GM10248 (cell line): ENCODE measurements at regions of chr9 and their contacts with region 1.

Region 1: DNA sequence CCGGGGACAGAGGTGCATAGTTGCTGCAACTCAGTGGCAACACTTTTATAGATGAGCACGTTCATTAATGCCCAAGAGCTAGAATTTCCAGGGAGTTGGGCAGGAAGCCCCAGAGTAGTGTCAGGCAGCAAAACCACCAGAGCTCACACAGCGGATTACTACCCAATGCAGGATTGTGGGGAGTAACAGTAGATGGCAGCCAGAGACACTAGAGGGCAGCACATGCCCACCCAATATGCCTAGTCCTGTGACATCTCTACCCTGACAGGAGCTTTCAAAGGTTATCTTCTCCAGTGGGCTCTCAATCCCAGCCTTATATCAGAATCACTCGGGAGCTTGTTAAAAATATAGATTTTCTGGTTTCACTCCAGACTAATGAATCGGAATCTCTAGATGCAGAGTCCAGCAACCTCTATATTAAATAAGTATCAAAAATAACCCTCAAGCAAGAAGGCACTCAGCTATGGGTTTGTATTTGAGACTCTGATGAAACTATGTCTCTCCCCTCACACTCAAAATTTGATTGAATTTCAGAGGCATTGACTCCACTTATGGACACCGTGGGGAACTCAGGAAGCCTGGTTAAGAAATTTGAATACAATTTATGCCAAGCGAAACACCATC is 58.4 kb upstream of the PHF24 start:
- DNase-seq: peak; percentile 72
- CTCF ChIP-seq: peak; percentile 82

Region 2: DNA sequence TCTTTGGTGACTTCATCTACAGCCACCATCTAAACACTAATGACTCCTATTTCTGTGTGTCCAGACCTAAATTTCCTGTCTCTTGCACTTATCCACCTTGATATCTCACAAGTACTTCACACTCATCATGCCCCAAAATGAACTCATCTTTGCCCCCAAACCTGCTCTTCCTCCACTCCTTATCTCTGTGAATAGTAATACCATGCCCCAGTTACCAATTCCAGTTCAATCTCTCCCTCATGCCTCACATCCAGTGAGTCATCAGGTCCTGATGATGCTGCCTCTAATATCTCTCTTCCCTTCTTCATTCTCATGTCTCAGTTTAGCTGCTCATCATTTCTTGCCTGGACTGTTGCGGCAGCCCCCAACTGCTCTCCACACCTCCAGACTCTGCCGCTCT is 75.0 kb after region 1 on chr9:
- CTCF ChIA-PET with region 1: interaction called, 33 read pairs
- POLR2A ChIA-PET with region 1: no interaction called
- DNase-seq: no peak
- CTCF ChIP-seq: no peak

Region 3: GRCh38 chr9:34994260-34994899 is 94.7 kb after region 1 on chr9:
- CTCF ChIA-PET with region 1: interaction called, 19 read pairs
- POLR2A ChIA-PET with region 1: no interaction called
- DNase-seq: no peak
- CTCF ChIP-seq: peak; percentile 38

Region 4: DNA sequence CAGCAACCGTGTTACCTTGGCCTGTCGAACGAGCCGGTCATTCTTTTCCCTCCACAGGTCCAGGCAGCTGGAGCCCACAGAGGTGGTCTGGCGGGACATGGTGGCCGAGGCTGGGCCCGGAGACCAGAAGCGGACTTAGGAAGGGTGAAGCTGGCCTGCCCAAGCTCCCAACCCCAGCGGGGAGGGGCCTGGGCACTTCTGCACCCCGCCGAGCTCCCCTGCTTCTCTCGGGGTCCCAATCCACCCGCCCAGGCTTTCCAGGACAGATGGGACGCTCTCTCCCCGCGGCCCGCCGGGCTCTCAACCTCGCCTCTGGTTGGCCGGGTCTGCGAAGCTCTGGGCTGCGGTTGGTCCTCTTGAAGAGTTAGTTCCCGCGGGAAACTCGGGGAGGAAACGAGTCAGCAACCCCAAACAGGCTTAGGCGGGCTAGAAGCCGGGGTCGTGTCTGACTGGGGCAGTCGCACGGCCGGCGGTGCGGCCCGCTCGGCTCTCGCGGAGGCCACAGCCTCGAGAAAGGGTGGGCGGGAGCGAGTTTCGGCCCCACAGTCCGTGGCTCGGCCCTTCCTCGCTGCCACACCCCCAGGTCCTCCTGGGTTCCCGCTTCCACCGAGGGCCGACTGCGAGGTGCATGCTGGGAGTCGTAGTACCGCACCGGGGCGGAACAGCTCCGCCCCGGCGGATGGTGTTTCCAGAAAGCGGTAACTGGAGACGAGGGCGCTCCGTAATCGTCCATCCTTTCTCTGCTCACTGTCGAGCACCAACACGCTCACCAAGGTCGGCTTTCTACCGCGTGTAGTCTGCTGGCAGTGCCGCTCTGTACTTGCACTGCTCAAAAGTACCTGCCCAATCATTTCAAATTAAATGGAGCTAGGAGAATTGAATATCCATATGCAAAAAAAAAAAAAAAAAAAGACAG is 180.0 kb after region 1 on chr9 and contains the start of gene FANCG:
- CTCF ChIA-PET with region 1: interaction called, 21 read pairs
- POLR2A ChIA-PET with region 1: no interaction called
- DNase-seq: peak; percentile 94
- CTCF ChIP-seq: no peak

Region 5: DNA sequence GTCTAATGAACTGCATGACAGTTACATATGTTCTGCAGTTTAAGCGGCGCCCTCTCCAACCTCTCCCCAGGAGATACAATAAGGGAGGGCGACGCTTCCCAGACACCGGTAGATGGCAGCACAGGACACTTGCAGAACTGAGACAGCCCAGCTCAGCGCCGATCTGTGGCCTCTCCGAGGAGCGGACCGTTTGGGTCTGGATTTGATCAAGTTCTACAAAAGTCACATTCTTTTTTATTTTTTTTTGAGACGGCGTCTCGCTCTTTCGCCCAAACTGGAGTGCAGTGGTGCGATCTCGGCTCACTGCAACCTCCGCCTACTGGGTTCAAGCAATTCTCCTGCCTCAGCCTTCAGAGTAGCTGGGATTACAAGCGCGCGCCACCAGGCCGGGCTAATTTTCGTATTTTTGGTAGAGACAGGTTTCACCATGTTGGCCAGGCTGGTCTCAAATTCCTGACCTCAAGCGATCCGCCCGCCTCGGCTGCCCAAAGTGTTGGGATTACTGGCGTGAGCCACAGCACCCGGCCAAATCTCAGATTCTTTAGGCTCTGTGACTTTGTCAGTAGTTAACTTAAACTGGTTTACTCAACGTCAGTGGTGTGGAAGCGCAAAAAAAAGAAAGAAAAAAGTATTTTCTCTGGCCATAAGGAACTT is 217.4 kb after region 1 on chr9:
- CTCF ChIA-PET with region 1: interaction called, 13 read pairs
- POLR2A ChIA-PET with region 1: no interaction called
- DNase-seq: peak; percentile 84
- CTCF ChIP-seq: peak; percentile 92